Vagina (tissue), 2 donors: ENCODE measurements at regions of chr14 and their contacts with region 1.

Region 1: GRCh38 chr14:105490572-105491366 is at the start of gene TEDC1:
- DNase-seq: peak; percentile 100
- H3K4me3 ChIP-seq: peak within 1 kb of the TSS; percentile 57 to 76
- H3K27ac ChIP-seq: peak within 1 kb of the TSS; percentile 97
- H3K4me1 ChIP-seq: peaks cover 56% of the 10 kb centered on the region
- H3K27me3 ChIP-seq: no peaks in the 10 kb centered on the region
- CTCF ChIP-seq: peak; percentile 35 to 51 (median 37)
- POLR2A ChIP-seq: peak in 1 of 2 donors; percentile 67
- total RNA-seq, gene TEDC1: 5.9 TPM

Region 2: GRCh38 chr14:105065280-105066228 is 425.2 kb before region 1 on chr14 and contains the start of gene GPR132:
- intact Hi-C with region 1: no loop called
- DNase-seq: no peak
- H3K4me3 ChIP-seq: peak within 1 kb of the TSS in 1 of 2 donors; percentile 35
- H3K27ac ChIP-seq: peak within 1 kb of the TSS; percentile 77
- H3K4me1 ChIP-seq: no peaks in the 10 kb centered on the region
- H3K27me3 ChIP-seq: no peaks in the 10 kb centered on the region
- CTCF ChIP-seq: no peak
- POLR2A ChIP-seq: no peak
- total RNA-seq, gene GPR132: 9.1 TPM

Region 3: GRCh38 chr14:105212541-105213300 is 278.0 kb before region 1 on chr14:
- intact Hi-C with region 1: loop called (anchors 10 kb)
- DNase-seq: no peak
- H3K4me3 ChIP-seq: no peak overlapping the region
- H3K27ac ChIP-seq: no peak overlapping the region
- H3K4me1 ChIP-seq: no peaks in the 10 kb centered on the region
- H3K27me3 ChIP-seq: no peaks in the 10 kb centered on the region
- CTCF ChIP-seq: no peak
- POLR2A ChIP-seq: no peak

Region 4: GRCh38 chr14:105300792-105301533 is 189.8 kb before region 1 on chr14 and contains the start of gene BRF1:
- intact Hi-C with region 1: loop called (anchors 5 kb)
- DNase-seq: peak; percentile 95 to 96
- H3K4me3 ChIP-seq: peak within 1 kb of the TSS; percentile 70 to 97
- H3K27ac ChIP-seq: peak within 1 kb of the TSS; percentile 93
- H3K4me1 ChIP-seq: peaks cover 28% of the 10 kb centered on the region
- H3K27me3 ChIP-seq: no peaks in the 10 kb centered on the region
- CTCF ChIP-seq: no peak
- POLR2A ChIP-seq: peak in 1 of 2 donors; percentile 44
- total RNA-seq, gene BRF1: 64.6 TPM

Region 5: DNA sequence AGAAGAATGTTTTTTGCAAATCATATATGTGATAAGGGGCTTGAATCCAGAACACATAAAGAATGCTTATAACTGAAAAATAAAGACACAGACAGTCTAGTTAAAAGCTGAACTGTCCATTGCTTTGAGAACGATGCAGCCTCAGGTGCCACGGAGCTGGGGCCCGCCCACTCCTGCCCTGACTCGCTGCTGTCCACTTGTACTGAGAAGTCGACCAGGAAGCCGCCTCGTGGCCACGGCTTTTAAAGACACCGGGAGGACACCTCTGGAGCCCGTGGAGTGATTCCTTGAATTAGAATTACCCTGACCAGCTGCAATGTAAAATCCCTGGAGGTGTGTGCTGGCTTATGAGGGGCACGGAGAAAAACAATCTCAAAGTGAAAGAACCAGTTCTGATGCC is 116.4 kb before region 1 on chr14:
- intact Hi-C with region 1: loop called (anchors 5 kb)
- DNase-seq: no peak
- H3K4me3 ChIP-seq: no peak overlapping the region
- H3K27ac ChIP-seq: no peak overlapping the region
- H3K4me1 ChIP-seq: no peaks in the 10 kb centered on the region
- H3K27me3 ChIP-seq: no peaks in the 10 kb centered on the region
- CTCF ChIP-seq: no peak
- POLR2A ChIP-seq: no peak